ENCODE measurements at regions of chr2 and their contacts with region 1.

Region 1: DNA sequence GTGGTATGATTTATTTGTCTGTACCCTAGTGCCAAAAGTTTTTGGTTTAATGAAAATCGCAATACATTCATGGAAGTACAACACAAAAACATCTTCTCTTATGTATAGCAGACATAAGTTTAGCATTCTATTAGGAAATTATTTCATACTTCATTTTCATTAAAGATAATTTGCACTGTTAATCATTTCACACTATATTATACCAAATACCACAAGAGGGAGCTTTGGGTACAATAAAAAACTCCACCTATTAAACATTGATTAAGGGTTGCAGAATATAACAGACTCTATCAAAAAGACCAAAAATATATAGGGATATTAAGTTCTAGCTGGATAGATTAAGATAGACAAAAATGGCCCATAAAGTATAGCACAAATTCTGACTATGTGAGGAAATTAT is 79.0 kb downstream of the SLC66A3 start:
- DNase-seq: no peak
- H3K4me3 ChIP-seq: no peak overlapping the region
- CTCF ChIP-seq: no peak
- POLR2A ChIP-seq: no peak

Region 2: GRCh38 chr2:11411768-11412448 is 177.6 kb after region 1 on chr2:
- intact Hi-C with region 1: loop called (anchors 10 kb)
- DNase-seq: peak in 1 of 2 donors; percentile 82
- H3K4me3 ChIP-seq: no peak overlapping the region
- CTCF ChIP-seq: peak in 1 of 3 donors; percentile 28
- POLR2A ChIP-seq: no peak

Measured in lower leg skin (tissue), 4 donors.